Dorsolateral prefrontal cortex (tissue), 120 donors: ENCODE measurements at regions of chr4 and their contacts with region 1.

Region 1: GRCh38 chr4:183261953-183262775 is 57.9 kb downstream of the CLDN22 start:
- DNase-seq: peak; percentile 53 to 90 (median 78)
- H3K4me3 ChIP-seq: no peak overlapping the region
- H3K27ac ChIP-seq: peak overlapping the region in 40 of 59 donors; percentile 9 to 84 (median 54)
- H3K27me3 ChIP-seq: no peaks in the 10 kb centered on the region
- CTCF ChIP-seq: peak; percentile 58 to 85 (median 72)

Region 2: DNA sequence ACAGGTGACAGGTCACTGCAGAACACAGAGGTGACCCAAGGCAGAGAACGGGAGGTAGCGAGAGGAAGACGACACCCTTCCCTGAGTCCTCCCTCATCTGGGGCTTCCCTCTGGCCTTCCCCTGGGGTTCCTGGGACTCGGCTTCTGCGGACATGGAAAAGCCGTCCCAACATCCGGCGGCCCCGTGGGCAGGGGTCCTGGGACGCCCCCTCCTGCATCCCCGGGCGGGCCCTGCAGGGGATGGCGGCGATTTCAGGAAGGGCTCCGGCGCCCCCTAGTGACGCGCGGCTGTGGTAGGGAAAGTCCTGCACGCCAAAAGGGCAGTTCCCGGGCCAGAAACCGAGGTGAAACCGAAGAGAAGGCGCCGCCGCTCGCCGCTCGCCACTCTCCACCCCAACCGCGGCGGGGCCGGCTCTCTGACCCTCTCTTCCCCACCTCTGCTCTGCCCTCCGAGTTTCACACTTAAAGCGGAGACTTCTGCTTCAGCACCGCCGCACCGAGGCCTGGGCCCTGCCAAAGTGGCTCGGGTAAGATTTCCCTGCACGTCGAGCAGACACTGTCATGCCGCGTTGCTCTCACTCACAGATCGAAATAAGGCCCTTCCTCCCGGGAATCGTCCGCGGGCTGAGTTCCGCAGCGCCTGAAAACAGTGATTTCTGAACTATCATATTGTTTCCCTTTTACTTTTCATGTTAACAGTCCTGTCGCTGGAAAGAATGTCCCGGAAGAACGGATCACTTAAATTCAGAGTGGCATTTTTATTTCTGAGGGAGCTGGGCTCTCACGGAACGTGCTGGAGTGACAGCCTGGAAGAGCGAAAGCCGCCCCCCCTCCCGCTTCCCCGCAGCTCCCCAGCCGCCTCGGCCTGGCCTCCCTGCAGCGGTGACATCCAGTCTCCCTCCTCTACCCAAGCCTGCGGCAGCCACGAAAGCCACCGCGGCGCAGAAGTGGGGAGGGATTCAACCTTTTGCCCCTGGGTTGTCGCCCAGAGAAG is 455.6 kb before region 1 on chr4:
- intact Hi-C with region 1: loop called in 1 of 2 experiments (anchors 10 kb)
- DNase-seq: peak; percentile 58 to 84 (median 68)
- H3K4me3 ChIP-seq: peak overlapping the region; percentile 34 to 75 (median 58)
- H3K27ac ChIP-seq: peak overlapping the region in 7 of 59 donors; percentile 38 to 73 (median 50)
- H3K27me3 ChIP-seq: peaks cover 0 to 4% (median 0%) of the 10 kb centered on the region in 45 donors
- CTCF ChIP-seq: peak; percentile 58 to 97 (median 86)

Region 3: DNA sequence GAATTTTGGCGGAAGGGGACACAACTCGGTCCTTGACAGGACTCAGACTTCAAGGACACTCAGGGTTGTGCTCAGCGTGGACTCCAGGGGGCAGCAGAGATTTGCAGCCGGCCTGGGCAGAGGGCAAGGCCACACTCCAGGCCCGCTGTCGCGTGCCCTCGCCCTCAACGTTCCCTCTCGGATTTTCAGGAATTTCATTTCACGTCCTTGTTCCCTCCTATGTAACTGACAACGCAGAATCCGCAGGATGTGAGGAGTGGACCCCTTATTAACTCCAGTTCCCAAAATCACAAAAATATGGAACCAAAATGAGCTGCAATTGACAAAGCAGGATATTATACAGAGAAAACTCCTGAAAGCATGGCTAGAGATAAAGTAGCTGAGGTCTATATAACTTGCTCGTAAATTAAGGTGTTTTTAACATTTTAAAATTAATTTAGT is 323.9 kb before region 1 on chr4:
- intact Hi-C with region 1: loop called (anchors 1 to 5 kb)
- DNase-seq: peak; percentile 23 to 82 (median 65)
- H3K4me3 ChIP-seq: no peak overlapping the region
- H3K27ac ChIP-seq: no peak overlapping the region
- H3K27me3 ChIP-seq: peaks cover 0 to 13% (median 0%) of the 10 kb centered on the region in 45 donors
- CTCF ChIP-seq: peak; percentile 42 to 93 (median 84)

Region 4: GRCh38 chr4:183398227-183399125 is 136.3 kb after region 1 on chr4:
- intact Hi-C with region 1: loop called in 1 of 2 experiments (anchors 5 kb)
- DNase-seq: peak; percentile 45 to 82 (median 60)
- H3K4me3 ChIP-seq: peak overlapping the region; percentile 11 to 80 (median 66)
- H3K27ac ChIP-seq: peak overlapping the region in 38 of 59 donors; percentile 2 to 84 (median 64)
- H3K27me3 ChIP-seq: no peaks in the 10 kb centered on the region
- CTCF ChIP-seq: peak in 54 of 56 donors; percentile 13 to 69 (median 52)

Region 5: DNA sequence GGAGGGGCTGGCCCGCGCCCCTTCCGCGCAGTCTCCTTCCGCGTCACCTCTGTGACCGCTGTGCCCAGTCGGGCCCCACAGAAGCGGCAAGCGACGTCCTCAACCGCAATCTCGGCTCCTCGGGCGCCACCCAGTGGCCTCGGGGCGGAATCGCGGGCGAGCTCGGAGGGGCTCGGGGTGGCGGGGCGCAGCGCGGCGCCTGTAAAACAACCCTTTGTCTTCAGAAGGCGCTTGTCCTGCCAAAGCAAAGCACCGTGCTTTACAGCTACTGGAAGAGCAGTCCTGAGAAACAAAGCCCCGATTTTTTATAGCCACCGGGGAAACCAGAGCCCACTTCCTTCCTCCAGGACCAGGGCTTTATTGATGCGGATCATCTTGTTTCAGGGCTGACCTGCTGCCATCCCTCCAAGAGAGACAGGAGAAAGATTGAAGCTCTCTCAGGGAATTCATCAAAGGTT is 145.0 kb after region 1 on chr4:
- intact Hi-C with region 1: loop called (anchors 5 kb)
- DNase-seq: peak; percentile 76 to 94 (median 86)
- H3K4me3 ChIP-seq: peak overlapping the region; percentile 32 to 73 (median 53)
- H3K27ac ChIP-seq: peak overlapping the region in 58 of 59 donors; percentile 23 to 94 (median 86)
- H3K27me3 ChIP-seq: no peaks in the 10 kb centered on the region
- CTCF ChIP-seq: peak; percentile 85 to 99 (median 97)